A673 (cell line): ENCODE measurements at regions of chr12 and their contacts with region 1.

Region 1: DNA sequence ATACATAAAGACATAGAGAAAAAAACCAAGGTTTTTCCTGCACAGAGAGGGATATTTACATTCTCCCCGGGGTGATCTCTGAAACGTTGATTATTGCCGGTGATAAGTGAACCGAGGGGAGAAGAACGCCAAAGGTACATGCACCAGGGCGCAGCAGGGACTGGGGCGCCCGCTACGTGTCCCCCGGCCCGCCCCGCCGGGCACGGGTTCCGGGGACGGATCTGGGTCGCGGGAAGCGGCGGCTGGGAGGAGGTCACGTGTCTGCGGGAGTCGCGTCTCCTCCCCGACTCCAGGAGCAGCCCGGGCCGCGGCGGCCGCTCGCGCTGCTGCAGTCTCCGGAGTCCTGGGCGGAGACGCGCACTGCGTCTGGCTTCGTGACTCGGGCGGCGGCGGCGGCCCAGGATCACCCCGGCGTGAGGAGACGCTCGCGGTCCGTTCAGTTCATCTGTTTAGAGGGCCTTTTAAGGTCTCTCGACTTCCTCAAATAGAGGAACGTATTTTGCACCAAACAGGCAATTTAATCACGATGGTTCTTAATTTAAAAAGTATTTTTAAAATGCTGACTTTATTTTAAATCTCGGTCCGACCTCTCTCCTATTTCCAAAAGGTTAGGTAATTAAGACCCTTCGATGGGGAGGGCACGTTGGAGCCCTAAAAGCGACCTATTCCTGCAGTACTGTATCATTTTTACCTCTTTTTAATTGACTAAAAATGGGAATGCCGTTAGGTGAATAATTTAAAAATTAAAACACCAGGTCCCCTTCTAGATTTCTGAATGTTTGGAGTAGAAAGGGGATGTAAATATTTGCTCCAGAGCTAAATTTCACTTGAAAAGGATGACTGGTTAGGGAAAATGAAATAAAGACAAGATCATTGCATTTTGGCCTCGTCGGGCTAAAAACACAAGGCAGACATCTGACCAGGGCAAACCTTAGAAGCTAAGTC is 1.8 kb upstream of the BHLHE41 start:
- DNase-seq: peak; percentile 83
- H3K4me3 ChIP-seq: peak overlapping the region; percentile 56
- H3K27ac ChIP-seq: no peak overlapping the region
- H3K4me1 ChIP-seq: peaks cover 15% of the 10 kb centered on the region
- H3K27me3 ChIP-seq: peaks cover 63% of the 10 kb centered on the region
- CTCF ChIP-seq: no peak

Region 2: GRCh38 chr12:26195641-26196420 is 69.2 kb after region 1 on chr12:
- CTCF ChIA-PET with region 1: no interaction called
- POLR2A ChIA-PET with region 1: no interaction called
- intact Hi-C with region 1: loop called (anchors 5 kb)
- DNase-seq: peak; percentile 53
- H3K4me3 ChIP-seq: peak overlapping the region; percentile 46
- H3K27ac ChIP-seq: peak overlapping the region; percentile 61
- H3K4me1 ChIP-seq: peaks cover 23% of the 10 kb centered on the region
- H3K27me3 ChIP-seq: no peaks in the 10 kb centered on the region
- CTCF ChIP-seq: no peak

Region 3: GRCh38 chr12:26274441-26275312 is 148.1 kb after region 1 on chr12:
- CTCF ChIA-PET with region 1: no interaction called
- POLR2A ChIA-PET with region 1: no interaction called
- intact Hi-C with region 1: loop called (anchors 10 kb)
- DNase-seq: peak; percentile 94
- H3K4me3 ChIP-seq: no peak overlapping the region
- H3K27ac ChIP-seq: peak overlapping the region; percentile 78
- H3K4me1 ChIP-seq: peaks cover 33% of the 10 kb centered on the region
- H3K27me3 ChIP-seq: no peaks in the 10 kb centered on the region
- CTCF ChIP-seq: no peak

Region 4: DNA sequence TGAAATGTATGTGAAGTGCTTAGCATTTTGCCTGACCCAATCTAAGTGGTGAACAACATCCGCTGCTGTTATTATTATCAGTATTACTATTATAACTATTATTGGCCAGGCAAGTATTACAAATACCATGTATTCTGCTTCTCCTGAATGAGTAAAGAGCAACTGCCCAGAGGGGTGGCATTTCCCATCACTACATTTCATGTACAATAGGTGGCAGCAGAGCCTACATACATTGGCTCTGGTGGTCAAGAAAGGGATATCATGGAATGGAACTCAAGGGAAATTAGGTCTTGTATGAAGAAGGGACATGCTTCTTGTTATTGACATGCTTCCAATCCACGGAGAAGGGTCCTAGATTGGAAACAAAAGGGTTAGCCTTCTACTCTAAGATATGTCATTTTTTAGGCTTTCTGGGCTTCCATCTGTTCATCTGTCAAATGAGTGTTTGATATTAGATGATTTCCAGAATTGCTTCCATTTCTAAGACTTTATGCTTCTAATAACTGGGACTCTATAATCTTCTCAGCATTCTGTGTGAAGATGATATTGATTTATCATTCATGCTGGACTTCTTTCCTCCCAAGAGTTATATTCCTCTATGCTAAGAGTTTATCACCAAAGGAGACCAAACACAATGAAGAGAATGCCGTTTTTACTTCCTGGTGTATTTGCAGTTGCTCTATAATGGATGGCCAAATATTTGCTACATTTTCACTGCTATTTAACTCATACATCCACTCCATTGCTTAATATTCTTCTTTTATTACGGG is 307.9 kb after region 1 on chr12:
- CTCF ChIA-PET with region 1: interaction called, 3 read pairs
- POLR2A ChIA-PET with region 1: no interaction called
- intact Hi-C with region 1: loop called (anchors 5 kb)
- DNase-seq: peak; percentile 79
- H3K4me3 ChIP-seq: no peak overlapping the region
- H3K27ac ChIP-seq: no peak overlapping the region
- H3K4me1 ChIP-seq: no peaks in the 10 kb centered on the region
- H3K27me3 ChIP-seq: no peaks in the 10 kb centered on the region
- CTCF ChIP-seq: peak; percentile 79

Region 5: DNA sequence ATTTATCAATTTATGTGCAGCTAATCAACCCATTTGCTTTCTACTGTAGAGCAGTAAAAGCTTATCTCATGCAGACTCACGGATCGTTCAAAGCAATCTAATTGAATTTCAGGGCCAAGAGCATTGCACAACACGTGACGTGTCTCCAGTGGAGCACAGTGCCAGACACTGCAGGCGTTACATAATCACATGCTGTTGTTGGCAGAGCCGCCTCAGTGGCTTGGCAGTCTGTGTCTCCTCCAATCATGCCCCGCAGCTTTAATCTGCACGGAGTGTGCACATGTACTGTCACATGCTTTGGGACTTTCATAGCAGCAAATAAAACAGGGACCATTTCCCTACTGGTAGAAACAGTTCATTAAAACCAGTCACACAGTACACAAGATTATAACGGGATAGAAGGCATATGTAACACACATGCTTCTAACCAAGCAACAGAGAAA is 397.1 kb after region 1 on chr12:
- CTCF ChIA-PET with region 1: no interaction called
- POLR2A ChIA-PET with region 1: no interaction called
- intact Hi-C with region 1: loop called (anchors 5 kb)
- DNase-seq: peak; percentile 96
- H3K4me3 ChIP-seq: no peak overlapping the region
- H3K27ac ChIP-seq: no peak overlapping the region
- H3K4me1 ChIP-seq: peaks cover 31% of the 10 kb centered on the region
- H3K27me3 ChIP-seq: no peaks in the 10 kb centered on the region
- CTCF ChIP-seq: no peak

Region 6: GRCh38 chr12:26701604-26702215 is 575.1 kb after region 1 on chr12:
- CTCF ChIA-PET with region 1: interaction called, 4 read pairs
- POLR2A ChIA-PET with region 1: no interaction called
- intact Hi-C with region 1: loop called (anchors 2 kb)
- DNase-seq: peak; percentile 78
- H3K4me3 ChIP-seq: no peak overlapping the region
- H3K27ac ChIP-seq: no peak overlapping the region
- H3K4me1 ChIP-seq: peaks cover 29% of the 10 kb centered on the region
- H3K27me3 ChIP-seq: no peaks in the 10 kb centered on the region
- CTCF ChIP-seq: peak; percentile 75